CD8-positive, alpha-beta T cell (primary cell): ENCODE measurements at regions of chr2 and their contacts with region 1.

Region 1: DNA sequence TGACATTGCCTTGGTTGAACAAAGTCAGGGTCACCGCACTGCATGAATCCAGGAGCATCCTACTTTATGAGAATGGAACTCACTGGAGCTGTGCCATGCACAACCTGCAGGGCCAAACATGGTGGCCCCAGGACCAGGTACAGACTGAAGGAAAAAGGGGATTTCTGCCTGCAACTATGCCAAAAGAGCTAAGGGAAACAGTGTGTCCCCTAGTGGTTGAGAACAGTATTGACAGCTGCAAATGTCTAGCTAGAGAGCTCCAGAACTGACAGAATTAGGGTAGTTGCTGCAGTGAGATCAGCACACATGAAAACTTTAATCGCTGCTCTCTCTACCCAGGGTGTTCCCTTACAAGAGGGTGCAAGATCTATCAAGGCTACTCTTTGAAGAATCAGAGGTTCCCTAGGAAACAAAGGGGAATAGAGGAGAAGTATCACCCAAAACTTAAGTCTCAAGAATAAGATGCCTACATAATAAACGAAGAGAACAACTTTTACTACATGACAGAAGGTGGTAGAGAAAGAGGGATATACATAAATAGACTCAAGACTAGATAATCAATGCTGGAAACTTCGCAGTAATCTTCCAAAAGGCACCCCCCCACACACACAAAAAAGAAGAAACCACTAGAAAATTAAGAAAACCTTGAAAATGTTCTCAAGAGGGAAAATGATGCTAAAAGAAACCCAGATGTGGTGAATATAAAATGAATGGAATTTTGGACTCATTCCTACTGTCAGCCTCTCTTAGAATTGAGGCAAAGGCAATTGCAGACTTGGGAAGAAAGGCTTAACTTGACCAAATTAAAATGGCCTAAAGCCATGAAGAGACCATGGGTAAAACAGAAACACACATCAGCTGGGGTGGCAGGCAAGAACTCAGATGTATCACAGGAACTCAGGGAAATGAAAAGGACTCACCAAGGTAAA is 43.6 kb upstream of the IHH start:
- DNase-seq: peak in 2 of 9 experiments; percentile 43 to 60
- ATAC-seq: peak; percentile 78
- H3K4me3 ChIP-seq: no peak overlapping the region
- H3K4me3 Mint-ChIP-seq: no peak overlapping the region
- H3K27ac ChIP-seq: no peak overlapping the region
- H3K27ac Mint-ChIP-seq: no peak overlapping the region
- H3K4me1 ChIP-seq: peaks cover 7% of the 10 kb centered on the region
- H3K4me1 Mint-ChIP-seq: peaks cover 28% of the 10 kb centered on the region
- H3K27me3 ChIP-seq: no peaks in the 10 kb centered on the region
- H3K27me3 Mint-ChIP-seq: no peaks in the 10 kb centered on the region
- CTCF ChIP-seq: peak; percentile 70

Region 2: GRCh38 chr2:218959141-218959731 is 145.1 kb before region 1 on chr2 and contains the start of gene CDK5R2:
- CTCF ChIA-PET with region 1: no interaction called
- POLR2A ChIA-PET with region 1: no interaction called
- intact Hi-C with region 1: no loop called
- DNase-seq: peak; percentile 34 to 82 (median 61)
- ATAC-seq: peak; percentile 86
- H3K4me3 ChIP-seq: peak within 1 kb of the TSS in 1 of 2 experiments; percentile 15
- H3K4me3 Mint-ChIP-seq: peak within 1 kb of the TSS; percentile 73
- H3K27ac ChIP-seq: no peak within 1 kb of the TSS
- H3K27ac Mint-ChIP-seq: no peak within 1 kb of the TSS
- H3K4me1 ChIP-seq: peaks cover 9% of the 10 kb centered on the region
- H3K4me1 Mint-ChIP-seq: peaks cover 18% of the 10 kb centered on the region
- H3K27me3 ChIP-seq: peaks cover 35 to 43% of the 10 kb centered on the region in 2 experiments
- H3K27me3 Mint-ChIP-seq: peaks cover 67% of the 10 kb centered on the region
- CTCF ChIP-seq: no peak
- total RNA-seq, gene CDK5R2: not detected

Region 3: DNA sequence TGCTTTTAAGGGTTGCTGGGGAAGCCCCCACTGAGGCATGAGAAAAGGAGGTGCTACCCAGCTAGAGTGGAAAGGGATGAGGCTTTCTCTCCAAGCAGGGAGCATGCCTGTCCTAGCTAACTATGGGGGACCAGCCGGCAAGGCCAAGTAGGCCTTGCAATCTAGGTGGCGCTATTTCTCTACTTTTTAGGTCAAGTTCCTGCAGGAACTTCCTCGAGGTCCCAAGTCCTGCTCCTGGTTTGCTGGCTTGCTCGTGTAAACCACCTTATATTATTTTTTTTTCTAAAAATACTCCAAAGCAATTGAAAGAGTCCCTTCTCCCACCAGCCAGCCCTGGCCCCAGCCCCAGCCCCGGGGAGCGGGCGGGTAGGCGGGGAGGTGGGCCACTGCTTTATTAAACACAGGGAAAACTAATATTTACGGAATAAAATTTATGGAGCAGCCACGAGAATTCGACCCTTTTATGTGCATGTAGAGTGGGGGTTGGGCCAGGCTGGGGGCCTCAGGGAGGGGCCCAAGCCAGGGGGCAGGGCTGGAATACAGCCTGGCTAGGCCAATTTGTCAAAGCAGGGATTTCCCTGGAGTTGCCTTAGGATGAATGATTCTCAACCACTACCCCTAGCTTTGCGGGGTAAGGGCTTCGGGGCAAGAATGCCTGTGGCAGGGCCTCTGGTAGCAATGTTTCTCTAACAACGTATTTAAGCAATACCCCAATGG is 30.8 kb before region 1 on chr2:
- CTCF ChIA-PET with region 1: interaction called, 5 read pairs
- POLR2A ChIA-PET with region 1: no interaction called
- intact Hi-C with region 1: loop called in 1 of 2 experiments (anchors 5 kb)
- DNase-seq: peak in 3 of 9 experiments; percentile 9 to 49 (median 30)
- ATAC-seq: no peak
- H3K4me3 ChIP-seq: no peak overlapping the region
- H3K4me3 Mint-ChIP-seq: no peak overlapping the region
- H3K27ac ChIP-seq: no peak overlapping the region
- H3K27ac Mint-ChIP-seq: no peak overlapping the region
- H3K4me1 ChIP-seq: no peaks in the 10 kb centered on the region
- H3K4me1 Mint-ChIP-seq: no peaks in the 10 kb centered on the region
- H3K27me3 ChIP-seq: no peaks in the 10 kb centered on the region
- H3K27me3 Mint-ChIP-seq: no peaks in the 10 kb centered on the region
- CTCF ChIP-seq: no peak

Region 4: GRCh38 chr2:219142329-219142728 is 38.0 kb after region 1 on chr2:
- CTCF ChIA-PET with region 1: no interaction called
- POLR2A ChIA-PET with region 1: no interaction called
- intact Hi-C with region 1: no loop called
- DNase-seq: no peak
- ATAC-seq: no peak
- H3K4me3 ChIP-seq: no peak overlapping the region
- H3K4me3 Mint-ChIP-seq: no peak overlapping the region
- H3K27ac ChIP-seq: no peak overlapping the region
- H3K27ac Mint-ChIP-seq: no peak overlapping the region
- H3K4me1 ChIP-seq: no peaks in the 10 kb centered on the region
- H3K4me1 Mint-ChIP-seq: no peaks in the 10 kb centered on the region
- H3K27me3 ChIP-seq: no peaks in the 10 kb centered on the region
- H3K27me3 Mint-ChIP-seq: no peaks in the 10 kb centered on the region
- CTCF ChIP-seq: no peak

Region 5: GRCh38 chr2:219177552-219178376 is 73.4 kb after region 1 on chr2 and contains the start of gene RETREG2:
- CTCF ChIA-PET with region 1: no interaction called
- POLR2A ChIA-PET with region 1: no interaction called
- intact Hi-C with region 1: no loop called
- DNase-seq: peak; percentile 61 to 96 (median 78)
- ATAC-seq: peak; percentile 55
- H3K4me3 ChIP-seq: peak within 1 kb of the TSS; percentile 71 to 82
- H3K4me3 Mint-ChIP-seq: peak within 1 kb of the TSS; percentile 91
- H3K27ac ChIP-seq: peak within 1 kb of the TSS; percentile 97 to 98
- H3K27ac Mint-ChIP-seq: peak within 1 kb of the TSS; percentile 99
- H3K4me1 ChIP-seq: peaks cover 75% of the 10 kb centered on the region
- H3K4me1 Mint-ChIP-seq: peaks cover 75% of the 10 kb centered on the region
- H3K27me3 ChIP-seq: no peaks in the 10 kb centered on the region
- H3K27me3 Mint-ChIP-seq: no peaks in the 10 kb centered on the region
- CTCF ChIP-seq: no peak
- total RNA-seq, gene RETREG2: 76.7 to 79.0 TPM